Calu3 (cell line): ENCODE measurements at regions of chr3 and their contacts with region 1.

Region 1: GRCh38 chr3:115217678-115218451 is 70.8 kb upstream of the ZBTB20 start:
- DNase-seq: peak; percentile 63
- H3K4me3 Mint-ChIP-seq: no peak overlapping the region
- H3K27ac Mint-ChIP-seq: no peak overlapping the region
- H3K4me1 Mint-ChIP-seq: no peaks in the 10 kb centered on the region
- H3K27me3 Mint-ChIP-seq: no peaks in the 10 kb centered on the region
- CTCF ChIP-seq: peak; percentile 59

Region 2: GRCh38 chr3:114674036-114674435 is 543.8 kb before region 1 on chr3:
- CTCF ChIA-PET with region 1: no interaction called
- intact Hi-C with region 1: no loop called
- DNase-seq: no peak
- H3K4me3 Mint-ChIP-seq: no peak overlapping the region
- H3K27ac Mint-ChIP-seq: no peak overlapping the region
- H3K4me1 Mint-ChIP-seq: peaks cover 8% of the 10 kb centered on the region
- H3K27me3 Mint-ChIP-seq: no peaks in the 10 kb centered on the region
- CTCF ChIP-seq: no peak

Region 3: DNA sequence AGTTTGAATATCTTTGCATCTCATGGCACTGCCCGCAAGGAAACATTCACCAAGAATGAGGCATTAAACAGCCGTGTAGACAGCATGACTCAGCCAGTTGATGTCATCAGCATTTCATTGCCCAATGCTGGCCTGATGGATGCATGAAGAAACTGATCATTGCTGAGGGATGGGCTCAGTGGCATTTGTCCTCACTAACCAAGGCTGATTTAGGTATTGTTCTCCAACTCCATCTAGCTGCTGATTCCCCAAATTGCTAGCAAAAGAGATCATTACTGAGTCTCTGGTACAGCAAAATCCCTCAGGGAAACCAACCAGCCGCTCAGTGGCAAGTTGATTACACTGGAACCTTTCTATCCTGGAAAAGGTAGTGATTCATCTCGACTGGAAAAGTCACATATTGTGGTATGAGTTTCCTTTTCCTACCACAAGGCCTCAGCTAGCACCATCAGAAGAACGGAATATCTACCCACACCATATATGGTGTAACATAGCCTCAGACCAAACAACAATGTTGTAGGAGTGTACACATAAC is 219.0 kb after region 1 on chr3:
- CTCF ChIA-PET with region 1: no interaction called
- intact Hi-C with region 1: loop called (anchors 1 kb)
- DNase-seq: peak; percentile 30
- H3K4me3 Mint-ChIP-seq: no peak overlapping the region
- H3K27ac Mint-ChIP-seq: no peak overlapping the region
- H3K4me1 Mint-ChIP-seq: no peaks in the 10 kb centered on the region
- H3K27me3 Mint-ChIP-seq: no peaks in the 10 kb centered on the region
- CTCF ChIP-seq: peak; percentile 13

Region 4: DNA sequence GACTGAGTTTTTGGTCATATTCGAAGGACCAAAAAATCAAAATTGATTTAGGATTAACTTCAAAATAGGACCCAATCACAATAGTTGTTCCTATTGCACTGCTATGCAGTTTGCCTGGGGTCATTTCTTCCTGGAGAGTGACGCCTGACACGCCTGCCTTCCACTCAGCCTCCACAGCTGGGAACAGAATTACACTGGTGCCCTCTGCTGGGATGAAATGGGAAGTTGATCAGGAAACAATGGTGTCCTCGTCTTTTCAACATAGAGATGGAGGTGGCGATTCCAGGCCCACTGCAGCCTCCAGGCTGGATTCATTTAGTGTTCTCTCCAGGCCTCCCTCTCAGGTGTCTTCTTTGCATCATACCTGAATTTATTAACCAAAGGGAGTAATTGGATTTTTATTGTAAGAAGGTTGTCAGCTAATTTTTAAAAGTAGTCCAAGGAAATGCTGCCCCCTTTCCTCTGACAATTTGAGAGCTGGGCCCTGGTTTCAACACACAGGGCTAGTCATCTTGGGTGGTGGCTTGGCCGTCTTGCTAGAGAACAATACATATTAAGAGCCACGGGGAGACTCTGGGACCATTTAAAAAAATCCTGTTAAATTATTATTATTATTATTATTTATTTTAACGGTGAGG is 475.1 kb after region 1 on chr3:
- CTCF ChIA-PET with region 1: interaction called, 4 read pairs
- intact Hi-C with region 1: loop called (anchors 1 kb)
- DNase-seq: peak; percentile 82
- H3K4me3 Mint-ChIP-seq: no peak overlapping the region
- H3K27ac Mint-ChIP-seq: no peak overlapping the region
- H3K4me1 Mint-ChIP-seq: peaks cover 12% of the 10 kb centered on the region
- H3K27me3 Mint-ChIP-seq: no peaks in the 10 kb centered on the region
- CTCF ChIP-seq: peak; percentile 63

Region 5: DNA sequence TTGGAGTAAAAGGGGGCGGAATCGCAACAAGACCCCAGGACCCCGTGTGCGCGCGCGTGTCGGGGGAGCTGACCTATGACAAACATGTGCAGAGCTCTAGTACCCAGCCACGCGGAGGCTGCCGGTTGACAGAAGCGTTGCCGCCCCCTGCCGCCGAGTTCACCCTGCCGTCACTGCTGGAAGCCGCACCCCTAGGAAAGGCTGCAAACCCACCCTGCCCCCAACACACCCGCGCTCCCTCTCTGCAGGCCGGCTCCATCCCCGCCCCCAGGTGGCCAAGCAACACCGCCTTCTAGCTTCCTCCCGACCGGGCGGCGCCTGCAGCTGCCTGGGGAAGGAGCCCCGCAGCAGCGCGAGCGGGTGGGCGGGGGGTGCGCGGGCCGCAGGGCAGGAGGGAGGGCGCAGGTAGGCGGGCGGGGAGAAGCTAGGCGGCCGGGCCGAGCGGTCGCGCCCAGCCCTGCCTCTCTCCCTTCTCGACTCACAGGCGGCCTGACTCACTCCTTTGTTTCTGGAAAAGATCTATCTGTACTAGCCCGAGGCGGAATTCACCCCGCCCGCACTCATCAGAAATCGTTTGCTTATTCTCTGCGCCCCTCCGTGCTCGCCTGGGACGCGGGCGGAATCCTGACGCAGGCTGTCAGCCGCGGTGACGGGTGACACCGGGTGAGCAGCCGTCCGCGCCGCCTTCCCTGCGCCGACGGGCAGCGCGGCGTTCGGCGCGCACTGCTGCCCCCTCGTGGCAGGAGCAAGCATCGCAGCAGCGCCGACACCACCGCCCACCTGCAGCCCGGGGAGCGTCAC is 566.3 kb after region 1 on chr3:
- CTCF ChIA-PET with region 1: interaction called, 14 read pairs
- intact Hi-C with region 1: loop called (anchors 2 kb)
- DNase-seq: peak; percentile 97
- H3K4me3 Mint-ChIP-seq: peak overlapping the region; percentile 86
- H3K27ac Mint-ChIP-seq: peak overlapping the region; percentile 79
- H3K4me1 Mint-ChIP-seq: peaks cover 38% of the 10 kb centered on the region
- H3K27me3 Mint-ChIP-seq: no peaks in the 10 kb centered on the region
- CTCF ChIP-seq: peak; percentile 93

Region 6: DNA sequence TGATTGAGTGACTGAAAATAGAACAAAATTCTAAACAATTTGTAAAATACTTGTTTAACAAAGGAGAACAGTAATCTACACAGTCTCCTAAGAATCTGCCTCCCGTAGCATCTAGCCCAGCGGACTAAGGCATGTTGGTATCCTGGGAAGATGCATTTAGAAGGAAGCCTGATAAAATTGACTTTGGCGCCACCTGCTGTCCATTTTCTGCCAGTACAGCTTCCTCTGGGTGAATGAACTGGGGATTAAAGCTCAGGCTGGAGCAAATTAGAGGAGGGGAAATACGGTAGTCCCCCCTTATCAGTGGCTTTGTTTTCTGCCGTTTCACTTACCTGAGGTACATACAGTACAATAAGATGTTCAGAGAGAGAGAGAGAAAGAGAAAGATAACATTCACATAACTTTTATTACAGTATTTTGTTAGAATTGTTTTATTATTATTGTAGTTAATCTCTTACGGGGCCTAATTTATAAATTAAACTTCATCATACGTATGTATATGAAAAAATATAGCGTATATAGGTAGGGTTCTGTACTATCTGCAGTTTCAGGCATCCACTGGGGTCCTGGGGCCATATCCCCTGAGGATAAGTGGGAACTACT is 597.0 kb after region 1 on chr3:
- CTCF ChIA-PET with region 1: interaction called, 3 read pairs
- intact Hi-C with region 1: loop called (anchors 2 kb)
- DNase-seq: peak; percentile 76
- H3K4me3 Mint-ChIP-seq: no peak overlapping the region
- H3K27ac Mint-ChIP-seq: no peak overlapping the region
- H3K4me1 Mint-ChIP-seq: no peaks in the 10 kb centered on the region
- H3K27me3 Mint-ChIP-seq: no peaks in the 10 kb centered on the region
- CTCF ChIP-seq: peak; percentile 78